GM12878 (cell line): ENCODE measurements at regions of chr7 and their contacts with region 1.

Region 1: GRCh38 chr7:22809902-22810642 is 12.6 kb downstream of the TOMM7 start:
- DNase-seq: no peak
- ATAC-seq: peak; percentile 49; the same call in 2 of the 3 replicates
- H3K4me3 ChIP-seq: no peak overlapping the region
- H3K27ac ChIP-seq: no peak overlapping the region
- H3K4me1 ChIP-seq: peaks cover 11% of the 10 kb centered on the region; the same call in 1 of the 2 replicates
- H3K27me3 ChIP-seq: no peaks in the 10 kb centered on the region
- CTCF ChIP-seq: no peak
- EP300 ChIP-seq: no peak
- POLR2A ChIP-seq: no peak
- RAD21 ChIP-seq: no peak

Region 2: DNA sequence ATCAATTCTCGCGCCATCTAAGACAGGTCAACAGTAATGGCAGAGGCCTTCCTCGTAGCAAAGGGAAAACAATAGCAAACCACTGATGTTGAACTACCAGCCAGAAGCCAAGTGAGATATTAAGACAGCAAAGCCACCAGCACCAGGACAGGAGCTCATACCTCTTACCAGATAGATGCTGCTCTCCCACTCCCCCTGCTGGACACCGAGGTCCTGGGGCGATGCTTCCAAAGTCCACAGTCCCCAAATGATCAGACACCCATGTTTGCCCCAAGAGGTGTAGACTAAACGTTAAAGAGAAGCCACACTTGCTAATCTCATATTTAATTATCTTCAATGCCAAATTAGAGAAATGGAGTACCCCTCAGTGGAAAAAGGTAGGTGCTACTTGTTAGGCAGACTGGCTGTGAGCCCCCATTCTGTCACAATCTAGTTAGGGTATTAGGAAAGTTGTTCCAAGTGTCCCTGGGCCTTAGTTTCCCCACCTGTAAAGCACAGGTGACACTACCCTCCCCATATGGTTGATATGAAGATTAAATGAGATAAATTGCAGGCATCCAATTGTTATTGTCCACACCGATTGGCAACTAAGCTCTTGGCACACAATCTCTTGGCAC is 27.3 kb before region 1 on chr7:
- CTCF ChIA-PET with region 1: interaction called, 11 read pairs
- POLR2A ChIA-PET with region 1: no interaction called
- RAD21 ChIA-PET with region 1: no interaction called
- SMC1A ChIA-PET with region 1: interaction called, 3 read pairs
- in situ Hi-C with region 1: no loop called
- intact Hi-C with region 1: no loop called
- DNase-seq: no peak
- ATAC-seq: peak; percentile 99
- H3K4me3 ChIP-seq: no peak overlapping the region
- H3K27ac ChIP-seq: no peak overlapping the region
- H3K4me1 ChIP-seq: no peaks in the 10 kb centered on the region
- H3K27me3 ChIP-seq: no peaks in the 10 kb centered on the region; a peak in 1 of 4 replicates
- CTCF ChIP-seq: peak; percentile 81 to 97 (median 97)
- EP300 ChIP-seq: no peak
- POLR2A ChIP-seq: no peak
- RAD21 ChIP-seq: peak; percentile 75

Region 3: DNA sequence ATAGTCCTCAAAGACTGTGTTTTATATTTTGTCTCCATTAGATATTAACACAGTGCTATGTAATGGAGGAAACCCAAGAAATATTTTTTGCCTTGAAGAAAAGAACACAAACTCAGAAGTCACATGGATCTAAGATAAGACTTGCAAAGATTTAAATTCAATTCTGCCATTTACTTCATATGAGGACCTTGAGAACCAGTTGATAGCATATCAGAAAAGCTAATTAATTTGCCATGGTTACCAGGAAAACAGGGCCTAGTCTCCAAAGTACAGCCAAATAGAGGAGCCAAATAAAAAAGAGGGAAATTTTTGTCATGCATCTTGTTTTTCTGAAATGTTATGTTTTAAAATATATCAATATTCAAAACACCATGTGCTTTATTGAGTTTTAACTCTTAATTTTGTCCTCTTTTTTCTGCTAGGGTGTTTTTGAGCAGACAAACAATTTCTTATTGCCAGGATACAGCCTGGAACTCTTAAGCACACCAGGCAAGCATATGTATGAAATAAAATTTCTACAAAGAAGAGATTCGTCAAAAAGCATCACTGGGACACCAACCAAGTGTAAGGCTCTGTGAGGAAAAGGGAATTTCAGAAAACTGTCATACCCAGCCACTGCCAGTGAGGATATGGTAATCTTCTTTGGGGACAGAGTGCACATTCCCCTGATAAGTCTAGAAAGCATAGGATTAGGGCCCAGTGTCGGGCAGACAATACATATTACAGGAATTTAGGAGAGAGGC is 23.2 kb after region 1 on chr7:
- CTCF ChIA-PET with region 1: no interaction called
- POLR2A ChIA-PET with region 1: no interaction called
- RAD21 ChIA-PET with region 1: no interaction called
- SMC1A ChIA-PET with region 1: no interaction called
- in situ Hi-C with region 1: no loop called
- intact Hi-C with region 1: no loop called
- DNase-seq: no peak
- ATAC-seq: no peak
- H3K4me3 ChIP-seq: no peak overlapping the region
- H3K27ac ChIP-seq: no peak overlapping the region
- H3K4me1 ChIP-seq: no peaks in the 10 kb centered on the region
- H3K27me3 ChIP-seq: no peaks in the 10 kb centered on the region
- CTCF ChIP-seq: no peak
- EP300 ChIP-seq: no peak
- POLR2A ChIP-seq: no peak
- RAD21 ChIP-seq: no peak